ENCODE measurements at regions of chr14 and their contacts with region 1.

Region 1: DNA sequence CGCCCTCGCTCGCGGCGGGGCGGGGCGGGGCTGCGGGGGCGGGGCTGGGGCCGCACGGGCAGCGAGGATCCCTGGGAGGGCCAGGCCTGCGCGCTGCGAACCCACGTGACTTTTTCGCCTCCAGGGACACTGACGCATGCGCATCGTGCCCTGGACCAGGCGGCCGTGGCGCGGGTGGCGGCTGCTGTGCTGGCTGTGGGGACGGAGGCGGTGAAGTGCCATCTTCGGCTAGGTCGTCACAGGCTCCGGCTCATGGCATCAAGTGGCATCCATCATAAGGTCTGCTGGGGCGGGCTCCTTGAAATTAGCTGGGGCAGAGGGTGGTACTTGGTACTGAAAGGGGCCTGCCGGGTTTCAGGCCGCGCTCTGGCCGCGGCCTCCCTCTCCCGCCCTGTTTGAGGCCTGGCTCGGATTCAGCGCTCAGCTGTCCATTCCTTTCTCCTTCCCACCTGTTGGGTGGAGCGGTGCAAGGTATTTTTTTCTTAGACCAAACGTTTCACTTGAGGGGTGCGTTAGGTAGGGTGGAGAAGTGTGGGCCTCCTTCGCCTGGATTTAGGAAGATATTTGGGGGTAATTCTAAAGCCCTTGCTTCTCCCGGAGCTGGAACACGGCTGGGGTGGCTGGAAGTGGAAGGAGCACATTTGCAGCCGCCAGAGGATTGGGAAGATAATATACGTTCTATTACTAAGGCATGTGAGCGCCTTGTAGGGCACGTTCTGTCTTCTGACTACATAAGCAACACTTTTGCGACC is at the start of gene PRPF39:
- DNase-seq: peak; percentile 97
- ATAC-seq: peak; percentile 94
- H3K4me3 Mint-ChIP-seq: peak within 1 kb of the TSS; percentile 96
- H3K27ac Mint-ChIP-seq: peak within 1 kb of the TSS; percentile 92
- H3K4me1 Mint-ChIP-seq: peaks cover 46% of the 10 kb centered on the region
- H3K27me3 Mint-ChIP-seq: no peaks in the 10 kb centered on the region
- CTCF ChIP-seq: no peak
- total RNA-seq, gene PRPF39: 46.0 and 53.4 TPM in 2 replicates

Region 2: GRCh38 chr14:44897045-44897844 is 186.9 kb before region 1 on chr14:
- CTCF ChIA-PET with region 1: no interaction called
- POLR2A ChIA-PET with region 1: interaction called, 4 read pairs
- intact Hi-C with region 1: loop called (anchors 1 kb)
- DNase-seq: peak; percentile 75
- ATAC-seq: peak; percentile 97
- H3K4me3 Mint-ChIP-seq: peak overlapping the region; percentile 93
- H3K27ac Mint-ChIP-seq: peak overlapping the region; percentile 94
- H3K4me1 Mint-ChIP-seq: peaks cover 17% of the 10 kb centered on the region
- H3K27me3 Mint-ChIP-seq: no peaks in the 10 kb centered on the region
- CTCF ChIP-seq: no peak

Region 3: GRCh38 chr14:44988694-44989093 is 95.5 kb before region 1 on chr14:
- CTCF ChIA-PET with region 1: no interaction called
- POLR2A ChIA-PET with region 1: no interaction called
- intact Hi-C with region 1: no loop called
- DNase-seq: no peak
- ATAC-seq: no peak
- H3K4me3 Mint-ChIP-seq: no peak overlapping the region
- H3K27ac Mint-ChIP-seq: no peak overlapping the region
- H3K4me1 Mint-ChIP-seq: peaks cover 14% of the 10 kb centered on the region
- H3K27me3 Mint-ChIP-seq: no peaks in the 10 kb centered on the region
- CTCF ChIP-seq: no peak

Region 4: DNA sequence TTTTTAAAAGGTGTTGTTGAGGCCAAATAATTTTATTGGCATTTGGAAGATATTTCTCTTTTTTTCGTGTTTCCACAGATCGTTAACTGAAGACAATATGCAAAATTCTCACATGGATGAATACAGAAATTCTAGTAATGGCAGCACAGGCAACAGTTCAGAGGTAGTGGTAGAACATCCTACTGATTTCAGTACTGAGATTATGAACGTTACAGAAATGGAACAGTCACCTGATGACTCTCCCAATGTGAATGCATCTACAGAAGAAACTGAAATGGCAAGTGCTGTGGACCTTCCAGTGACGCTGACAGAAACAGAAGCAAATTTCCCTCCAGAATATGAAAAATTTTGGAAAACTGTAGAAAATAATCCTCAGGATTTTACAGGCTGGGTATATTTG is 11.0 kb after region 1 on chr14:
- CTCF ChIA-PET with region 1: no interaction called
- POLR2A ChIA-PET with region 1: no interaction called
- intact Hi-C with region 1: loop called (anchors 2 kb)
- DNase-seq: no peak
- ATAC-seq: no peak
- H3K4me3 Mint-ChIP-seq: no peak overlapping the region
- H3K27ac Mint-ChIP-seq: no peak overlapping the region
- H3K4me1 Mint-ChIP-seq: peaks cover 13% of the 10 kb centered on the region
- H3K27me3 Mint-ChIP-seq: no peaks in the 10 kb centered on the region
- CTCF ChIP-seq: no peak

Region 5: GRCh38 chr14:45253068-45253753 is 169.1 kb after region 1 on chr14 and contains the start of gene MIS18BP1:
- CTCF ChIA-PET with region 1: interaction called, 4 read pairs
- POLR2A ChIA-PET with region 1: no interaction called
- intact Hi-C with region 1: loop called (anchors 1 kb)
- DNase-seq: peak; percentile 87
- ATAC-seq: peak; percentile 88
- H3K4me3 Mint-ChIP-seq: peak within 1 kb of the TSS; percentile 94
- H3K27ac Mint-ChIP-seq: peak within 1 kb of the TSS; percentile 95
- H3K4me1 Mint-ChIP-seq: peaks cover 38% of the 10 kb centered on the region
- H3K27me3 Mint-ChIP-seq: no peaks in the 10 kb centered on the region
- CTCF ChIP-seq: no peak
- total RNA-seq, gene MIS18BP1: 38.8 and 47.1 TPM in 2 replicates